ENCODE measurements at regions of chr19 and their contacts with region 1.

Region 1: DNA sequence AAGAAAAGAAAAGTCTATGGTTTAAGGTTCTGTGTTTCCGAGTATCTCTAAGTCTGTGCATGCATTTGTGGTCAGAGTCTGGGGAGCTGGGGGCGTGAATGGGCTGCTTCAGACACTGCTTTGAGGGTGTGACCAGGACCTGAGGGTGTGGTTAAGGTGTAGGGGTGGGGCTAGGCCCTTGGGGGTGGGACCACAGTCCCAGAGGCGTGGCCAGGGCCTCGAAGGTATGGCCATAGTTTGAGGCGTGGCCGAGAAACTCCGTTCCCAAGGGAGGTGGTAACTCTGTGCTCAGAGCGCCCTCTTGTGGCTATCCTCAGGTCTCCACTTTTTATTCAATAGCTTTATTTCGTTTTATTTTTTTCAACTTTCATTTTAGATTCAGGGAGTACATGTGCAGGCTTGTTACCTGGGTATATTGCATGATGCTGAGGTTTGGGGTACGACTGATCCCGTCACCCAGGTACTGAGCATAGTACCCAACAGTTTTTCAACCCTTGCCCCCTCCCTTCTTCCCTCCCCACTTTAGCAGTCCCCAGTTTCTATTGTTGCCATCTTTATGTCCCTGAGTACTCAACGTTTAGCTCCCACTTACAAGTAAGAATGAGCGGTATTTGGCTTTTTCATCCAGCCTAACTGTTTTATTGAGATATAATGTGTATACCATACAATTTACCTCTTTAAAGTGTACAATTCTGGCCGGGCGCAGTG is 7.0 kb upstream of the CBLC start:
- DNase-seq: peak; percentile 95 to 99 (median 98)
- ATAC-seq: peak; percentile 99
- H3K4me3 ChIP-seq: no peak overlapping the region
- H3K4me3 Mint-ChIP-seq: peak overlapping the region; percentile 40
- H3K27ac ChIP-seq: no peak overlapping the region
- H3K27ac Mint-ChIP-seq: peak overlapping the region; percentile 65
- H3K4me1 ChIP-seq: peaks cover 21% of the 10 kb centered on the region
- H3K4me1 Mint-ChIP-seq: peaks cover 14% of the 10 kb centered on the region
- H3K27me3 ChIP-seq: no peaks in the 10 kb centered on the region
- H3K27me3 Mint-ChIP-seq: no peaks in the 10 kb centered on the region
- CTCF ChIP-seq: peak; percentile 73

Region 2: GRCh38 chr19:44530777-44531176 is 239.9 kb before region 1 on chr19:
- CTCF ChIA-PET with region 1: no interaction called
- POLR2A ChIA-PET with region 1: no interaction called
- intact Hi-C with region 1: no loop called
- DNase-seq: no peak
- ATAC-seq: no peak
- H3K4me3 ChIP-seq: no peak overlapping the region
- H3K4me3 Mint-ChIP-seq: no peak overlapping the region
- H3K27ac ChIP-seq: no peak overlapping the region
- H3K27ac Mint-ChIP-seq: no peak overlapping the region
- H3K4me1 ChIP-seq: no peaks in the 10 kb centered on the region
- H3K4me1 Mint-ChIP-seq: no peaks in the 10 kb centered on the region
- H3K27me3 ChIP-seq: peaks cover 4 to 18% of the 10 kb centered on the region in 2 experiments
- H3K27me3 Mint-ChIP-seq: peaks cover 16% of the 10 kb centered on the region
- CTCF ChIP-seq: no peak

Region 3: DNA sequence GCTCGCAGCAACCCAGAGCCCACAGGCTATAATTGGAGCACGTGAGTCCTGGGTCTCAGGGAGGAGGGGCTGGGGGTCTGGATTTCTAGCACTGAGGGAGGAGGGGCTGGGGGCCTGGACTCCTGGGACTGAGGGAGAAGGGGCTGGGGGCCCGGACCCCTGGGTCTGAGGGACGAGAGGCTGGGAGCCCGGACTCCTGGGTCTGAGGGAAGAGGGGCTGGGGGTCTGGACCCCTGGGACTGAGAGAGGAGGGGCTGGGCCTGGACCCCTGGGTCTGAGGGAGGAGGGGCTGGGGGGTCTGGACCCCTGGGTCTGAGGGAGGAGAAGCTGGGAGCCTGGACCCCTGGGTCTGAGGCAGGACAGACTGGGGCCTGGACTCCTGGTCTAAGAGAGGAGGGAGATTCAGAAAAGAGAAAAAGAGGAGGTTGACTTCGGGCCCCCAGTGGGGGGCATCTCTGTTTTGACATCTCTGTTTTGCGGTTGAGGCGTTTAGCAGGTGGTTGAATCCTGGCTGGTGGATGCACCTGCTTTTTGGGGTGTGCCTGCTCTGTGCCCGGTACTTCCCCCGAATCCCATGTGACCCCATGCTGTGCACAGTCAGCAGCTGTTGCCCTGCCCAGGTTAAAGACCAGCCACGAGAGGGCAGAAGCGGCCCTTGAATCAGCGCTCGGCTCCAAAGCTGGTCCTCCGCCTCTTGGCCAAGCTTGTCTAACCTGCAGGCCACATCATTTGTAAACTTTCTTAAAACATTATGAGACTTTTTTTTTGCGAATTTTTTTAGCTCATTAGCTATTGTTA is 116.5 kb before region 1 on chr19:
- CTCF ChIA-PET with region 1: interaction called, 12 read pairs
- POLR2A ChIA-PET with region 1: interaction called, 7 read pairs
- intact Hi-C with region 1: no loop called
- DNase-seq: peak; percentile 54 to 87 (median 66)
- ATAC-seq: peak; percentile 96
- H3K4me3 ChIP-seq: no peak overlapping the region
- H3K4me3 Mint-ChIP-seq: no peak overlapping the region
- H3K27ac ChIP-seq: no peak overlapping the region
- H3K27ac Mint-ChIP-seq: no peak overlapping the region
- H3K4me1 ChIP-seq: peaks cover 12% of the 10 kb centered on the region
- H3K4me1 Mint-ChIP-seq: peaks cover 7% of the 10 kb centered on the region
- H3K27me3 ChIP-seq: no peaks in the 10 kb centered on the region
- H3K27me3 Mint-ChIP-seq: no peaks in the 10 kb centered on the region
- CTCF ChIP-seq: peak; percentile 43

Region 4: DNA sequence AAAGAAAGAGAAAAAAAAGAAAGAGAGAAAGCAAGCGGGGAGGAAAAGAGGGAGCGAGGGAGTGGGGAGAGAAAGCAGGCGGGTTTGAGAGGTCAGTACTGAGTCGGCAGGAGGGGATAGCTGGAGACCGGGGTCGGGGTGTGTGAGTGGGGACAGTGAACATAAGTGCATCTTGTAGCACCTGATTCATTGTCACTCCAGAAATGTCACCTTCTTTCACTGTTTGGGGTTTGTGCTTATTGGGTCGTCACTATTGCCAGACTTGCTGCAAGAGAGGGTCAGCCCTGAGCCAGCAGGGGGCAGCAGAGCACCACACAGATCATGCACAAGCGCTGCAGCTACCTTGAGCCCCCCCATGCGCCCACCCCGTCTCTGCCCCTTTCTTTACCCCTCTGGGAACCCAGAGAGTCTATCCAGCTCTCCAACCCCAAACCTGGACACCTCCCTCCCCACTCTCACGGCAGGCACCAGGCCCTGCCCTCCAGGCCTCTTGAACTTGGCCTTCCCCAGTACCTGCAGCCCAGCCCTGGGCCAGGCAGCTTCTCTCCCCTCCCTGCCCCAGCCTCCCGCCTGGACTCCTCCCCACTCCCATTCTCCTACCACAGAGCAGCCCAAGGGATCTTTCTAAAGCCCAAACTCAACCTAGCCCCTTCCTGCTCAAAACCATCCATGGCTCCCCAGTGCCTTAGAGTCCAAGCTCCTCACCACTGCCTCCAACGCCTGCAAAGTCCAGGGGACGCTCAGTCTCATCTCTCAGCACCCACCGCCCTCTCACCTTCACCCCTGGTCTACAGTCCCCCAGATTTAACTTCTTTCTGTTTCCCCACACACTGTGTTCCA is 81.4 kb before region 1 on chr19:
- CTCF ChIA-PET with region 1: interaction called, 68 read pairs
- POLR2A ChIA-PET with region 1: interaction called, 10 read pairs
- intact Hi-C with region 1: loop called (anchors 1 kb)
- DNase-seq: peak; percentile 67 to 90 (median 76)
- ATAC-seq: peak; percentile 54
- H3K4me3 ChIP-seq: no peak overlapping the region
- H3K4me3 Mint-ChIP-seq: no peak overlapping the region
- H3K27ac ChIP-seq: no peak overlapping the region
- H3K27ac Mint-ChIP-seq: no peak overlapping the region
- H3K4me1 ChIP-seq: peaks cover 32% of the 10 kb centered on the region
- H3K4me1 Mint-ChIP-seq: peaks cover 35% of the 10 kb centered on the region
- H3K27me3 ChIP-seq: no peaks in the 10 kb centered on the region
- H3K27me3 Mint-ChIP-seq: peaks cover 23% of the 10 kb centered on the region
- CTCF ChIP-seq: peak; percentile 87

Region 5: DNA sequence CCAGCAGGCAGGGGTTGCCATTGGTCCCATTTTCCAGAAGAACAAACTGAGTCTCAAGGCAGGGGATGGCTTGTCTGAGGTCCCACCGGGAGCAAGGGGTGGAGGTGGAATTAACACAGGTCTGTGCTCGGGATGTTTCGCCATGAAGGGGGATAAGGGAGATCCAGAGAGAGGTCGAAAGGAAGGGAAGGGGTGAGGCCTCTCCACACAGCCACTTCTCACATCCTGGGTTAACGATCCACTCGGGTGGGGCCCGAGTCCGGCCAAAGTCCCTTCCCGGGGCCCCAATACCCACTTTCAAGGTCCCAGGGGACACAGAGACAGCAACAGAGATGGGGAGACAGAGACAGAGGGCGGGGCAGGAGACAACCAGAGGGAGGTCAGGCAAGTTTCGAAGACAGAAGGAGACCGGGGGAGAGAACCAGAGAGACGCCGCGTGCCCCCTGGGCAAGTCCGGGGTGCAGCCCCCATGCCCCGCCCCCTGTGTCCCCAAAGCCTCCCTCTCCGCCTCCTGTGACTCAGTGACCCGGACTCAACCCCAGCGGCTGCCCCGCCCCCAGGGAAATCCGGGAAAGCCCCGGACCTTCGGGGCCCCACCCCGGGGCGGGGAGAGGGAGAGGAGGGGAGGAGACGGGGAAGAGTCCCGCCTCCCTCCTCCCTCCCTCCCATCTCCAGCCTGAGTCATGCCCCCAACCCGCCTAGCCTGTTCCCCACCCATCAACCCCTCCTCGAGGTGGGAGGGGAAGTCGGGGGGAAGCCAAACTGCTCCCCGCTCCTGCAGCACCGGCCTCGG is 23.6 kb before region 1 on chr19:
- CTCF ChIA-PET with region 1: interaction called, 23 read pairs
- POLR2A ChIA-PET with region 1: interaction called, 17 read pairs
- intact Hi-C with region 1: loop called (anchors 1 kb)
- DNase-seq: peak; percentile 67 to 96 (median 88)
- ATAC-seq: peak; percentile 74
- H3K4me3 ChIP-seq: peak overlapping the region; percentile 76
- H3K4me3 Mint-ChIP-seq: peak overlapping the region; percentile 94
- H3K27ac ChIP-seq: peak overlapping the region; percentile 90 to 92
- H3K27ac Mint-ChIP-seq: peak overlapping the region; percentile 91
- H3K4me1 ChIP-seq: peaks cover 57% of the 10 kb centered on the region
- H3K4me1 Mint-ChIP-seq: peaks cover 52% of the 10 kb centered on the region
- H3K27me3 ChIP-seq: no peaks in the 10 kb centered on the region
- H3K27me3 Mint-ChIP-seq: no peaks in the 10 kb centered on the region
- CTCF ChIP-seq: no peak

Region 6: DNA sequence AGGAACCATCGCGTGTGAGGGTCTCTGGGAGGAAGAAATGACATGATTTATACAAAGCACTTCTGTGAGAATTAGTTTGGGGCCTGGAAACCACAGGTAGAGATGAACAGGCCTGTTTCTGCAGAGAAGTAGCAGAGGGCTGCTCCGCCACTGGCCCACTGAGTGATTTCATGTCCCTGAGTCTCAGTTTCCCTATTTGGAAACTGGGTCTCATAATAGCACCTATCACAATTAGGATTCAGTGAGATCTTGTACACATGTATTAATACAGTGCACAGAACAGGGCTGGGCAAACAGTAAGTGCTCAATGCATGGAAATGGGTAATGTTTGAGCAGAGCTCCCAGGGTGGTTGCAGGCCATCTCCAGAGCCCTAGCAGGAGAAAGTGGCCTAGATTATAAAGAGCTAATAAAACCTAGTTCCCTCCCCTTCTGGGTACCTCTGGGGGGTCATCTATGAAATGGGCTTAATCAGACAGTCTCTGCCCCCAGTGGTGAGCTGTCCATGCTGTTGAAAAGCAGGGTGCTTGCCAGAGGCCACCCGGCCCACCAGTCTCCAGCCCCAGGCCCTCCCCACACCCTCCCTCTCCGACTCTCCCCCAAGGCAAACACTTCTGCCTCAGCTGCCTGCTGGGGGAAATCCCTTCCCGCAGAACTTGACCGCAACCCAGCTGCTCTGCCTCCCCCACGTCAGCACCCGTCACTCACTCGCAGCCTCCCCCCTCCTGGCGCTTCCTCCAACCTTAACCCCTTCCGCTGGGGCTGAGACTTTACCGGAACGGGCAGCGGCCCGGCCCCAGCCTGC is 17.7 kb before region 1 on chr19:
- CTCF ChIA-PET with region 1: interaction called, 31 read pairs
- POLR2A ChIA-PET with region 1: interaction called, 17 read pairs
- intact Hi-C with region 1: loop called (anchors 1 to 2 kb)
- DNase-seq: peak; percentile 85 to 98 (median 92)
- ATAC-seq: peak; percentile 78
- H3K4me3 ChIP-seq: peak overlapping the region; percentile 67
- H3K4me3 Mint-ChIP-seq: peak overlapping the region; percentile 98
- H3K27ac ChIP-seq: peak overlapping the region; percentile 87 to 95
- H3K27ac Mint-ChIP-seq: peak overlapping the region; percentile 99
- H3K4me1 ChIP-seq: peaks cover 88% of the 10 kb centered on the region
- H3K4me1 Mint-ChIP-seq: peaks cover 76% of the 10 kb centered on the region
- H3K27me3 ChIP-seq: no peaks in the 10 kb centered on the region
- H3K27me3 Mint-ChIP-seq: no peaks in the 10 kb centered on the region
- CTCF ChIP-seq: no peak

Region 7: DNA sequence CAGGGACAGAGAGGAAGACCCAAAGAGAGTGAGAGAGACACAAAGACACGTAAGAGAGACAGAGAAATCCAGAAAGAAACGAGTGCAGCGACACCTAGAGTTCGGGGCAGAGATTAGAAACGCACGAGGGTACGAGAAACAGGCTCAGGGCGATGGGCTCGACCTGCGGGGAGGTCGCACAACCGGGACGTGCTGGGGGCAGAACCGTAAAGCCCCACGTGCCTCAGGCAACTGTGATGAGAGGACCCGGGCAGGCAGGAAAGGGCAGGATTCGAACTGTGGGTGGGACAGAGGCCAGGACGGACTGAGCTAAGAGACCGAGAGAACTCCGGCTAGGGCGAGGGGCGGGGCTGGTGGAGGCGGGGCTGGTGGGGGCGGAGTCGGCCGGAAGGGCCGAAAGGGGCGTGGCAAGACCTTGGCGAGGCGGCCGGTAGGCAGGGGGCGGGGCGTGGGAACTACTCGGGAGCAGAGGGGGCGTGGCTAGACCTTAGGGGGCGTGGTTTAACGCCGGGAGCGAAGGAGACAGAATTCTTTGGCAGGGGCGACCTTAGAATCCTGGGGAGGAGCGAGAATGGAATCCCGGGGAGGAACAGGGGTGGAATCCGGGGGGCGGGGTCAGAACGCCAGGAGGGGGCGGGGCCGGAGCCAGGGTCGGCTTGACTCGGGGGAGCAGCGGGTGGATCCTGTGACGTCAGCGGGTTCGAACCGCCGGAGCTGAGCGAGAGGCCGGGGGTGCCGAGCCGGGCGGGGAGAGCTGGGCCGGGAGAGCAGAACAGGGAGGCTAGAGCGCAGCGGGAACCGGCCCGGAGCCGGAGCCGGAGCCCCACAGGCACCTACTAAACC is 75.1 kb after region 1 on chr19 and contains the start of gene NECTIN2:
- CTCF ChIA-PET with region 1: interaction called, 5 read pairs
- POLR2A ChIA-PET with region 1: no interaction called
- intact Hi-C with region 1: loop called in 1 of 2 experiments (anchors 2 kb)
- DNase-seq: peak; percentile 30 to 86 (median 64)
- ATAC-seq: peak; percentile 68
- H3K4me3 ChIP-seq: peak within 1 kb of the TSS; percentile 47
- H3K4me3 Mint-ChIP-seq: peak within 1 kb of the TSS; percentile 85
- H3K27ac ChIP-seq: no peak within 1 kb of the TSS
- H3K27ac Mint-ChIP-seq: peak within 1 kb of the TSS; percentile 49
- H3K4me1 ChIP-seq: peaks cover 52% of the 10 kb centered on the region
- H3K4me1 Mint-ChIP-seq: peaks cover 34% of the 10 kb centered on the region
- H3K27me3 ChIP-seq: peaks cover 11 to 20% of the 10 kb centered on the region in 2 experiments
- H3K27me3 Mint-ChIP-seq: peaks cover 21% of the 10 kb centered on the region
- CTCF ChIP-seq: no peak
- total RNA-seq, gene NECTIN2: 1.8 to 1.9 TPM

Measured in CD4-positive, alpha-beta T cell (primary cell).